T-cell (primary cell): ENCODE measurements at regions of chr1 and their contacts with region 1.

Region 1: DNA sequence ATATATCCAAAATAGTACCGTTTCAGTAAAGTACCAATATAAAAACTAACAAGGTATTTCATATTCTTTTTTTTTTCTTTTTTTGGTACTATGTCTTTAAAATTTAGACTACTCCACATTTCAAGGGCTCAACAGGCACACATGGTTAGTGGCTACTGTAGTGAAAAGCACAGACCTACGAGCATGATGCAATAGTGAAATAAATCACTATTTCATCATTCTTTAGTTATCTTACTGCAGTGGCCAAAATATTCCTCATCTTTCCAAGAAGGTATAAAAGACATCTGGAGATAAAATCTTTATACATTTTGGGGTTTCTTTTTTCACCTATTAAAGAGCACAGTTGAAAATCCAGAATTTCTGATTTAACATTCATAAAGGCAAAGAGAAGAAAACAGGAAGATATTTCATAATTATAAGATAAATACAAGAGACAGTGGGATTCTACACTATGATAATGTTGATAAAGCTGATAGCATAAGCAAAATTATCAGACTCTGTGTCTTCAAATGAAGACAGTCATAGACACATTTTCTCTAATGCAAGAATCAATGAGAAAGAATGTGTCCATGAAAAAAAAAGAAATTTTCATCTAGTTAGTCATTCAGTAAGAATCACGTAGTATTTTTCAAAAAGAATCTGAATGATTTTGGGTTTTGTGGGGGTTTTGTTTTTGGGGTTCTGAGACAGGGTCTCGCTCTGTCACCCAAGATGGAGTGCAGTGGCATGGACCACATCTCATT is 41.9 kb downstream of the CEP170 start:
- DNase-seq: no peak
- ATAC-seq: no peak
- H3K4me3 ChIP-seq: no peak overlapping the region
- H3K4me3 Mint-ChIP-seq: no peak overlapping the region
- H3K27ac ChIP-seq: no peak overlapping the region
- H3K27ac Mint-ChIP-seq: no peak overlapping the region
- H3K4me1 ChIP-seq: no peaks in the 10 kb centered on the region
- H3K4me1 Mint-ChIP-seq: peaks cover 0 to 7% (median 0%) of the 10 kb centered on the region in 3 donors
- H3K27me3 ChIP-seq: no peaks in the 10 kb centered on the region
- H3K27me3 Mint-ChIP-seq: no peaks in the 10 kb centered on the region

Region 2: GRCh38 chr1:243230914-243231313 is 17.7 kb after region 1 on chr1:
- CTCF ChIA-PET with region 1: no interaction called
- POLR2A ChIA-PET with region 1: interaction called in 1 of 2 experiments, 10 read pairs
- DNase-seq: no peak
- ATAC-seq: no peak
- H3K4me3 ChIP-seq: no peak overlapping the region
- H3K4me3 Mint-ChIP-seq: no peak overlapping the region
- H3K27ac ChIP-seq: no peak overlapping the region
- H3K27ac Mint-ChIP-seq: no peak overlapping the region
- H3K4me1 ChIP-seq: peaks cover 0 to 3% of the 10 kb centered on the region in 2 experiments
- H3K4me1 Mint-ChIP-seq: peaks cover 18 to 29% (median 19%) of the 10 kb centered on the region in 3 donors
- H3K27me3 ChIP-seq: no peaks in the 10 kb centered on the region
- H3K27me3 Mint-ChIP-seq: no peaks in the 10 kb centered on the region

Region 3: GRCh38 chr1:243254233-243254926 is 41.2 kb after region 1 on chr1:
- CTCF ChIA-PET with region 1: no interaction called
- POLR2A ChIA-PET with region 1: interaction called in 1 of 2 experiments, 11 read pairs
- DNase-seq: peak in 34 of 35 experiments; percentile 15 to 71 (median 43)
- ATAC-seq: peak; percentile 8 to 23 (median 10)
- H3K4me3 ChIP-seq: peak overlapping the region; percentile 96
- H3K4me3 Mint-ChIP-seq: peak overlapping the region; percentile 93 to 96 (median 95)
- H3K27ac ChIP-seq: peak overlapping the region; percentile 51
- H3K27ac Mint-ChIP-seq: peak overlapping the region; percentile 96 to 97
- H3K4me1 ChIP-seq: peaks cover 15 to 23% of the 10 kb centered on the region in 2 experiments
- H3K4me1 Mint-ChIP-seq: peaks cover 49 to 56% (median 51%) of the 10 kb centered on the region in 3 donors
- H3K27me3 ChIP-seq: no peaks in the 10 kb centered on the region
- H3K27me3 Mint-ChIP-seq: no peaks in the 10 kb centered on the region

Region 4: DNA sequence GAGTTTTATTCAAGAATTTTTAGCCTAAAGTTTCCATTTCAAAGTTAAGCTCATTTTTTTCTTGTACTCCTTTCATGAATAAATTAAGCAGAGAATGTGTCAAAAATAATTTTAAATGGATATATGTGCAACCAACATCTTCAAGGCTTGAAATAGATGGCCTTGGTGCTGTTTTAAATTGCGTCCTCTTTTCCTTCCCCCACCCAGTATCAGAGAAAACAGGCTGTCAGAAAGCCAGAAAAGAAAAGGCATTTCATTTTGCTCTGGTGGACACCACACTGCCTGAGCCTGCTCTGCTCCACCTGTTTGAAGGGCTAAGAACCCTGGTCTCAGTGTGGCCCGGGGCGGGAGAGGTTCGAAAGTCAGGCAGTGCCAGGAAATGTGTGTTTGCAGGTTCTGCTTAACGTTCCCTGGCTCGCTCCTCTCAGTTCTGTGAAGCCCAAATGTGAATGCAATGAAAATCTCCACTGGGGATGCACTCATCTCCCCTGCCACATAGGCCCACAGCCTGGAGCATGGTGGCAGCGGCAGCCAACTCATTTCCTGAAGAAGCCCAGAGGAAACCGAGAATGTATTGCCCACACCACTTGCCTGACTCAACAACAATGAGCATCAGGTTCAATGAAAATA is 177.1 kb after region 1 on chr1:
- CTCF ChIA-PET with region 1: no interaction called
- POLR2A ChIA-PET with region 1: no interaction called
- DNase-seq: no peak
- ATAC-seq: no peak
- H3K4me3 ChIP-seq: no peak overlapping the region
- H3K4me3 Mint-ChIP-seq: no peak overlapping the region
- H3K27ac ChIP-seq: no peak overlapping the region
- H3K27ac Mint-ChIP-seq: no peak overlapping the region
- H3K4me1 ChIP-seq: no peaks in the 10 kb centered on the region
- H3K4me1 Mint-ChIP-seq: peaks cover 0 to 2% (median 0%) of the 10 kb centered on the region in 3 donors
- H3K27me3 ChIP-seq: no peaks in the 10 kb centered on the region
- H3K27me3 Mint-ChIP-seq: no peaks in the 10 kb centered on the region